OCI-LY7 (cell line): ENCODE measurements at regions of chr20 and their contacts with region 1.

Region 1: GRCh38 chr20:16709017-16709416 is 20.8 kb upstream of the SNRPB2 start:
- DNase-seq: peak; percentile 41
- H3K4me3 ChIP-seq: peak overlapping the region; percentile 38
- H3K27ac ChIP-seq: peak overlapping the region; percentile 18
- H3K4me1 ChIP-seq: peaks cover 47% of the 10 kb centered on the region
- CTCF ChIP-seq: no peak

Region 2: GRCh38 chr20:16573001-16573965 is 135.7 kb before region 1 on chr20 and contains the start of gene KIF16B:
- CTCF ChIA-PET with region 1: no interaction called
- POLR2A ChIA-PET with region 1: interaction called, 3 read pairs
- intact Hi-C with region 1: loop called (anchors 5 kb)
- DNase-seq: peak; percentile 88
- H3K4me3 ChIP-seq: peak within 1 kb of the TSS; percentile 90
- H3K27ac ChIP-seq: peak within 1 kb of the TSS; percentile 30
- H3K4me1 ChIP-seq: peaks cover 26% of the 10 kb centered on the region
- CTCF ChIP-seq: 0 out of 2 replicates have a peak, but pooled peaks have one; percentile 16
- total RNA-seq, gene KIF16B: 6.2 and 8.6 TPM in 2 replicates

Region 3: GRCh38 chr20:16719421-16719820 is 10.4 kb after region 1 on chr20:
- CTCF ChIA-PET with region 1: no interaction called
- POLR2A ChIA-PET with region 1: interaction called, 12 read pairs
- intact Hi-C with region 1: no loop called
- DNase-seq: no peak
- H3K4me3 ChIP-seq: no peak overlapping the region
- H3K27ac ChIP-seq: no peak overlapping the region
- H3K4me1 ChIP-seq: no peaks in the 10 kb centered on the region
- CTCF ChIP-seq: no peak

Region 4: GRCh38 chr20:16729565-16730456 is 20.8 kb after region 1 on chr20 and contains the start of gene SNRPB2:
- CTCF ChIA-PET with region 1: no interaction called
- POLR2A ChIA-PET with region 1: interaction called, 82 read pairs
- intact Hi-C with region 1: loop called (anchors 2 kb)
- DNase-seq: peak; percentile 97
- H3K4me3 ChIP-seq: peak within 1 kb of the TSS; percentile 95
- H3K27ac ChIP-seq: peak within 1 kb of the TSS; percentile 46
- H3K4me1 ChIP-seq: peaks cover 16% of the 10 kb centered on the region
- CTCF ChIP-seq: no peak
- total RNA-seq, gene SNRPB2: 50.0 and 50.9 TPM in 2 replicates